ENCODE measurements at regions of chr2 and their contacts with region 1.

Region 1: DNA sequence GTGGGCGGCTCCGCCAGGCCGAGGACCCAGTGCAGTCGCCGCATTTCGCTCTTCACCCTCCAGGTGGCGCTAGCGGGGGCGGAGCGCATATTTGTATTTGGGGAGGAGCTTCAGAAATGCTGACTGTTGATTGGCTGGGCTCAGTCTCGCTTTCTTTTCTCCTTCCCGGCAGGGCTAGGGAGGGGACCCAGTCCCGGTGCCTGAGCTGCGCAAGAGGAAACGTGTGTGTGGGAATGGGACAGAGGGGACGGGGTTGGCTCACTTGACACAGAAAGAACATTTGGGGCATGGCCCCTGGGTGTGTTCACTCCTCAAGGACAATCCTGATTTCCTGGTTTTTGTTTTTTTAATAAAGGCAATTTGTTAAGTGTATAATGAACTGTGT is 20.3 kb upstream of the DNMT3A start:
- DNase-seq: peak; percentile 82 to 96
- H3K4me3 ChIP-seq: peak overlapping the region; percentile 43 to 59
- H3K27ac ChIP-seq: peak overlapping the region; percentile 4 to 34
- H3K4me1 ChIP-seq: no peaks in the 10 kb centered on the region
- H3K27me3 ChIP-seq: no peaks in the 10 kb centered on the region
- CTCF ChIP-seq: peak; percentile 89 to 98 (median 97)

Region 2: DNA sequence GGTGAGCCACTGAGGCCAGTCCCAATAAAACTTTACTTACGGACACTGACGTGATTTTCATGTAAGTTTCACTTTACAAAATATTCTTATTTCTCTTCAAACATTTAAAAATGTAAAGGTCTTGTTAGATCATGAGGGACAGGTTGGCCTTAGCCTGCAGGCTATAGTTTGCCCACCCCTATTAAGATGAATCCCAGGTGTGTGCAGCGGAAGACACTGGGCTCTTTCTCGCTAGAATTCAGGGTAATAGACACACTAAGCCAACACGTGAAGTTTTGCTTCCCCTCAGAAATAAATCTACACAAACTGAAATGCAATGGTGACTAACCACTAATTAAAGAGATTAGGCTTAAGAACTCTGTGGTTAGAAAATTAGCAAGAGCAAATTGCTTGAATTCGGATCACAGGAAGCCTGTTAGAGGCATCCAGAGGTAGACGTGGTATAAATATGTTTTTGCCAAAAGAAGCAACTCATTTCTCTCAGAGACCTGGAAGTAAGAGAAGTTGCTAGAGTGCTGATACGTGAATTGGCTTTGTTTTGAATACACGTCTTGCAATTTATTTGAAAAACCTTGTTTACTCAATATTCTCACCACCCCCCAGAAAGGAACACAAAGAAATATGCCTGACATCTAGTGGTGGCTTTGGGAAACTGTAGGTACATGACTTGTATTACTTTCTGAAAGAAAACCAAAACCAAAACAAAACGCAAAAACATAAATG is 159.8 kb after region 1 on chr2:
- intact Hi-C with region 1: loop called (anchors 5 kb)
- DNase-seq: no peak
- H3K4me3 ChIP-seq: peak overlapping the region; percentile 17 to 30
- H3K27ac ChIP-seq: no peak overlapping the region
- H3K4me1 ChIP-seq: peaks cover 0 to 3% of the 10 kb centered on the region in 2 donors
- H3K27me3 ChIP-seq: no peaks in the 10 kb centered on the region
- CTCF ChIP-seq: peak; percentile 58 to 77 (median 68)

Region 3: DNA sequence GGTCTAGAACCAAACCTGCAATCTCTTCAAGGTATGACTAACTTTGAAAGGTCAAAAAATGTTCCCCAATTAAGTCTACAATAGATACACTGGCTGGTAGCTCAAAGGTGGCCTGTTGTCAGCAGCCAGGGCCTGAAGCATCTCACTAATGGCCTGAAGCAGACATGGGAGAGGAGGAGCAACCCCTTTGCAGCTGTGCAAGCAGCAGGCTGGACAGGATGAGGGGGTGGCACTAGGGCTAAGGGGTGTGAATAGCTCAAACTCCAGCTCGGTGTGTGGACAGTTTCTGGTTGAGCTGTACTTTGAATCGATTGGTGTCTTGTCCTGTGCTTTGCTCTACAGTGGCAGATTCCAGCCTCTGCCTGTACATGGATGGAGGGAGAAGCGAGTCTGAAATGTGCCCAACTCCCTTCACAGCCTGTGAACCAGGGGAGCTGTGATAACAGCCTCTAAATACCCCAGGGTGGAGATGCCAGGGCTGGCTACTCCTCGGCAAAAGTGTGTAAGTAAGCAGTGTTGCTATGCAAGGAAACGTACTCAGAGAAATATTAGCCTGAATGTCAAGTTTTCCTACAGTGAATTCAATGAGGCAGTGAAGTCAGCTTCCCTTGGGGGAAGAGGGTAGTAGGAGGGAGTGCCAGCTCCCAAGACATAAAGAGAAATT is 346.0 kb after region 1 on chr2:
- intact Hi-C with region 1: no loop called
- DNase-seq: no peak
- H3K4me3 ChIP-seq: no peak overlapping the region
- H3K27ac ChIP-seq: no peak overlapping the region
- H3K4me1 ChIP-seq: no peaks in the 10 kb centered on the region
- H3K27me3 ChIP-seq: no peaks in the 10 kb centered on the region
- CTCF ChIP-seq: no peak

Measured in ascending aorta (tissue), 2 donors.